Activated CD4-positive, alpha-beta T cell treated with anti-CD3 and anti-CD28 coated beads for 36 hours (primary cell): ENCODE measurements at regions of chr17 and their contacts with region 1.

Region 1: GRCh38 chr17:45247429-45248131 is 14.3 kb downstream of the SPATA32 start:
- DNase-seq: peak; percentile 99
- ATAC-seq: peak; percentile 89
- H3K4me3 Mint-ChIP-seq: peak overlapping the region; percentile 83
- H3K27ac Mint-ChIP-seq: peak overlapping the region; percentile 92
- H3K4me1 Mint-ChIP-seq: peaks cover 57% of the 10 kb centered on the region
- H3K27me3 Mint-ChIP-seq: no peaks in the 10 kb centered on the region

Region 2: DNA sequence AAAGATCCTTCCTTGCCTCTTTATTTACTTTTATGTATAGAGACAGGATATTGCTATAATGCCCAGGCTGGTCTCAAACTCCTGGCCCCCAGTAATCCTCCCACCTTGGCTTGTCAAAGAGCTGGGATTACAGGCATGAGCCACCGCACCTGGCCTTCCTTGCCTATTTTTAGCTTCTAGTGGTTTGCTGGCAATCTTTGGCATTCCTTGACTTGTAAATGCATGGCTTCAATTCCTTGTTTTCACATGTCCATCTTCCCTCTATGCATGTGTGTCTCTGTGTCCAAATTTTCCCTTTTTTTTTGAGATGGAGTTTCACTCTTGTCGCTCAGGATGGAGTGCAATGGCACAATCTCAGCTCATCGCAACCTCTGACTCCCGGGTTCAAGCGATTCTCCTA is 63.4 kb before region 1 on chr17:
- CTCF ChIA-PET with region 1: no interaction called
- POLR2A ChIA-PET with region 1: no interaction called
- intact Hi-C with region 1: no loop called
- DNase-seq: no peak
- ATAC-seq: no peak
- H3K4me3 Mint-ChIP-seq: no peak overlapping the region
- H3K27ac Mint-ChIP-seq: no peak overlapping the region
- H3K4me1 Mint-ChIP-seq: no peaks in the 10 kb centered on the region
- H3K27me3 Mint-ChIP-seq: no peaks in the 10 kb centered on the region

Region 3: GRCh38 chr17:45228763-45229539 is 18.6 kb before region 1 on chr17:
- CTCF ChIA-PET with region 1: interaction called, 12 read pairs
- POLR2A ChIA-PET with region 1: interaction called, 16 read pairs
- intact Hi-C with region 1: loop called in 1 of 2 experiments (anchors 1 kb)
- DNase-seq: peak; percentile 93
- ATAC-seq: peak; percentile 37
- H3K4me3 Mint-ChIP-seq: peak overlapping the region; percentile 94
- H3K27ac Mint-ChIP-seq: peak overlapping the region; percentile 100
- H3K4me1 Mint-ChIP-seq: peaks cover 82% of the 10 kb centered on the region
- H3K27me3 Mint-ChIP-seq: no peaks in the 10 kb centered on the region

Region 4: DNA sequence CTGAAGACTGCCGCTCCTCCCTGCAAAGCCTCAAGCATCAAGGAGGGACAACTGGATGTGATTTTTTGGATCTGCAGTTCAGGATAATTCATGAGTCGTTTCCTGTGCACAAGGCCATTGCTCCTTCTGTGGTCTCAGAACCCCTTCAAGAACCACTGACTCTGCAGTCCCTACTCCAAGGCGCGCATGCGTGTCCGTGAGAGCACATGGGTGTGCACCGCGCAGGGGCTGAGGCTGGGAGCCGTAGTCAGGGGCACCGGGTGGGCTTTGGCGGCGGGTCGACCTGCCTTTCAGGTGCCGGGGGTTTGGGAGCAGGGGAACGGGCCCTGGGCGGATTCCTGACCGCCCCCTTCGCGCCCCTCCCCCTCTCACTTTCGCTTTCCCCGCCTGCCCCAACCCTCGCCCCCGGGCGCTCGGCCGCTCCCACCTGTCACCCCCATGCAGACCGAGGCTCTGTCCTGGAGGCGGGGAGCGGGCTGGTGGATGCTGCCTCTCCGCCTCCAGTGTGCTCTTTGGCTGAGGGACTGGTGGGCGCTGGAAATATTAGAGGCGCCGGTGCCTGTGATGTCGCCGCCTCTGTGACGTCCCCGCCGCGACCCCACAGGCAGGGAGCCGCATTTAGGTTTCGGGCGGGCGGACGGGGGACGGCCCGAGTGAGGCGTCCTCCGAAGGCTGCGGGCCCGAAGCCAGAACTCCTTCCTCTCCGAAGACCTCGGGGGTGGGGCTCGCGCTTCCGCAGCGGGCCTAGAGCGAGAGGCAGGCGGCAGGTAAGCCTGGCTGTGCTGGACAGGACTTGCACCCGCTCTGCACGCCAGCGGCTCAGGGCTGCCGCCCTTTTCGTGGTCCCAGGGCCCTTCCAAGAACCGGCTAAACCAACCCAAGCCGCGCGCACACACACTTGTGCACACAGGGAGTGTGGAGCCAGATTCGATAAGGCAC is 14.3 kb after region 1 on chr17 and contains the start of gene SPATA32:
- CTCF ChIA-PET with region 1: interaction called, 8 read pairs
- POLR2A ChIA-PET with region 1: interaction called, 5 read pairs
- intact Hi-C with region 1: loop called (anchors 1 to 2 kb)
- DNase-seq: peak; percentile 81
- ATAC-seq: peak; percentile 80
- H3K4me3 Mint-ChIP-seq: peak within 1 kb of the TSS; percentile 59
- H3K27ac Mint-ChIP-seq: peak within 1 kb of the TSS; percentile 72
- H3K4me1 Mint-ChIP-seq: peaks cover 34% of the 10 kb centered on the region
- H3K27me3 Mint-ChIP-seq: no peaks in the 10 kb centered on the region
- total RNA-seq, gene SPATA32: 0.21 to 0.25 TPM

Region 5: GRCh38 chr17:45317112-45317928 is 69.7 kb after region 1 on chr17:
- CTCF ChIA-PET with region 1: interaction called, 3 read pairs
- POLR2A ChIA-PET with region 1: interaction called, 9 read pairs
- intact Hi-C with region 1: loop called in 1 of 2 experiments (anchors 1 kb)
- DNase-seq: peak; percentile 100
- ATAC-seq: peak; percentile 81
- H3K4me3 Mint-ChIP-seq: peak overlapping the region; percentile 91
- H3K27ac Mint-ChIP-seq: peak overlapping the region; percentile 89
- H3K4me1 Mint-ChIP-seq: peaks cover 65% of the 10 kb centered on the region
- H3K27me3 Mint-ChIP-seq: no peaks in the 10 kb centered on the region

Region 6: GRCh38 chr17:45584092-45585036 is 336.8 kb after region 1 on chr17:
- CTCF ChIA-PET with region 1: no interaction called
- POLR2A ChIA-PET with region 1: no interaction called
- intact Hi-C with region 1: loop called in 1 of 2 experiments (anchors 1 kb)
- DNase-seq: peak; percentile 78
- ATAC-seq: peak; percentile 48
- H3K4me3 Mint-ChIP-seq: peak overlapping the region; percentile 90
- H3K27ac Mint-ChIP-seq: peak overlapping the region; percentile 94
- H3K4me1 Mint-ChIP-seq: peaks cover 24% of the 10 kb centered on the region
- H3K27me3 Mint-ChIP-seq: no peaks in the 10 kb centered on the region